H1 (cell line): ENCODE measurements at regions of chr18 and their contacts with region 1.

Region 1: DNA sequence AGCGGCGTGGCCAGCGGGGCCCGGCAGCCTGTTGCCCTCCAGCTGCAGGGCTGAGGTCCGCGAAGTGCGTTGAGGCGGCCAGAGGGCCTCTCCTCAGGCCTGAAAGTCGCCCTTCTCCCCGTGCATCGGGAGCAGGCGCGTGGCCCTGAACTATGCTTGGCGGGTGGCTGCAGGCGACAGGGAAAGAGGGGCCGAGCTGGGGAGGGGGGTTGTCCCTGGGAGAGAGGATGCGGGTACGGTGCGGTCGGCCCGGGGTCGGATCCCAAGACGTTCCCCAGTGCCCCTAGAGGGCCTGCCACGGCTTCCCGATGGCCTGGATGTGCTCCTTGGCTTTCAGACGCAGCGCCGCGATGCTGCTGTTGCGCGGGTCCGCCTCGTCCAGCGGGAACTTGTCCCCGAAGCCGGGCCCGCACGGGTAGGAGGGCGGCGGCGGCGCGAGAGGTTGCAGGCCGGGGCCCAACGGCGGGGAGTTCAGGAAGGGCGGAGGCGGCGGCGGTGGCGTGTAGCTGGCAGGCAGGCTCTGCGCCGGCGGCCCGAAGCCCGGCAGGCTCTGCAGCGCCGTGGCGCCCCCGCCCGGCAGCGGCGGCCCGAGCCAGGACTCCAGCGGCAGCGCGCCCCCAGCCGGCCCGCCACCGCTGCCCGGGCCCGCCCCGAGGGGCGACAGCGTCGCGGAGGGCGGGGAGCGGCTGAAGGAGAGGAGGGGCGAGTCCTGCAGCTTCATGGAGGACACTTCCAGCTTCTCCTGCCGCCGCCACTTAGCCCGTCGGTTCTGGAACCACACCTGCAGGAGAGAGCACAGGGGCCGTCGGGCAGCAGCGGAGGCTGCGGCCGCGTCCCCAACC is 4.3 kb downstream of the RAX start:
- DNase-seq: peak in 1 of 2 experiments; percentile 89
- H3K4me3 ChIP-seq: peak overlapping the region; percentile 51 to 67 (median 61)
- H3K27ac ChIP-seq: no peak overlapping the region
- H3K4me1 ChIP-seq: peaks cover 0 to 44% (median 24%) of the 10 kb centered on the region in 4 experiments; a peak in 6 of 7 replicates
- H3K27me3 ChIP-seq: peaks cover 88 to 98% (median 93%) of the 10 kb centered on the region in 4 experiments
- CTCF ChIP-seq: peak in 2 of 3 experiments; percentile 52 to 92; a peak in 3 of 4 replicates
- EP300 ChIP-seq: no peak
- POLR2A ChIP-seq: no peak
- RAD21 ChIP-seq: peak in 1 of 2 experiments; percentile 47; a peak in 2 of 4 replicates

Region 2: GRCh38 chr18:59008301-59008974 is 260.5 kb before region 1 on chr18:
- CTCF ChIA-PET with region 1: no interaction called
- POLR2A ChIA-PET with region 1: no interaction called
- DNase-seq: peak; percentile 10 to 52
- H3K4me3 ChIP-seq: peak overlapping the region in 1 of 4 experiments; percentile 12; a peak in 1 of 8 replicates
- H3K27ac ChIP-seq: no peak overlapping the region
- H3K4me1 ChIP-seq: peaks cover 0 to 5% (median 2%) of the 10 kb centered on the region in 4 experiments; a peak in 3 of 7 replicates
- H3K27me3 ChIP-seq: no peaks in the 10 kb centered on the region
- CTCF ChIP-seq: no peak
- EP300 ChIP-seq: no peak
- POLR2A ChIP-seq: no peak
- RAD21 ChIP-seq: no peak

Region 3: DNA sequence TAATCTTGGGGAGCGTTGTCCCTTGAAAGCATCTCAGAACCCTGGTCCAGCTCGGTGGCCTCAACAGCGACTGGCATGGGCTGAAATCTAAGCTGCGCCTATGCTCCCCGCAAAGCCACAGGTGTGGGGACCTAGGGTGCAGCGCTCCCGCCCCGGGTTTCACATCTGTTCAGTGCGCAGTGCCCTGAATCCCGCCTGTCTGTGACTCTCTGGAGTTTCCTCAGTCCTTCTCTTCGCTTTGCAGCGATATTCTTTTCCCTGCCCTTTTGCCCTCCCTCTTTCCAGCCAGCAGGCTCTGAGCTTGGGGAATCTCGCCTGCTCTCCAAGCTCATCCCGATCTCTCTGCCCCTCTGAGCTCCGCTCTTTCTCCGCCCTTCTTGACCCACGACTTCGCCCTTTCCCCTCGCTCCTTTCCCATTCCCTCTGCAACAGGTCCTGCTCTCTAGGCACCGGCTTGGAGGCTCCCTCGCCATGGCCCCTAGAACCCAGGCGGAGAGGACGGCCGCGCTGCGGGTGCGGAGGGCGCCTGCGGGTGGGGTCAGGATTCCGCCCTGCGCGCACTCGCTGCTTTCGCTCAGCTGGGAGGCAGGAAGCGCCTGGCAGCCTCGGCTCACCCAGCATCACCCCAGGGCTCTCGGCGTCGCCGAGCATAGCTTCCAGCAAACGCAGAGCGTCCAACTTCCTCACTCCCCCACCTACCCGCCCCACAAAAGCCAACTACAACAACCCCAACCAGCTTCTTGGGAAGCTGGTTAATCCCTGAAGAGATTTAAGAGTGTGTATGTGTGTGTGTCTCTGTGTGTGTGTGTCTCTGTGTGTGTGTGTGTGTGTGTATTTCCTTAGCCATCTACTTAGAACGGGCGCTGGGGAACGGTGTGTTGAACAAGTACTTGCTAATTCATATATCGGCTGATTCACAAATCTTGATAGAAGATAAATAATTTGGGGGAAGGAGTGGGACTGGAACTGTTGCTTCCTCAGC is 47.9 kb before region 1 on chr18:
- CTCF ChIA-PET with region 1: interaction called, 72 read pairs
- POLR2A ChIA-PET with region 1: interaction called, 5 read pairs
- DNase-seq: peak in 1 of 2 experiments; percentile 70
- H3K4me3 ChIP-seq: peak overlapping the region; percentile 45 to 71 (median 56)
- H3K27ac ChIP-seq: no peak overlapping the region
- H3K4me1 ChIP-seq: peaks cover 0 to 14% (median 7%) of the 10 kb centered on the region in 4 experiments; a peak in 5 of 7 replicates
- H3K27me3 ChIP-seq: peaks cover 46 to 66% (median 57%) of the 10 kb centered on the region in 4 experiments
- CTCF ChIP-seq: no peak
- EP300 ChIP-seq: no peak
- POLR2A ChIP-seq: no peak
- RAD21 ChIP-seq: no peak

Region 4: GRCh38 chr18:59286341-59286740 is 17.4 kb after region 1 on chr18:
- CTCF ChIA-PET with region 1: interaction called, 10 read pairs
- POLR2A ChIA-PET with region 1: no interaction called
- DNase-seq: no peak
- H3K4me3 ChIP-seq: no peak overlapping the region
- H3K27ac ChIP-seq: no peak overlapping the region
- H3K4me1 ChIP-seq: no peaks in the 10 kb centered on the region
- H3K27me3 ChIP-seq: peaks cover 0 to 4% (median 2%) of the 10 kb centered on the region in 4 experiments; a peak in 2 of 7 replicates
- CTCF ChIP-seq: no peak
- EP300 ChIP-seq: no peak
- POLR2A ChIP-seq: no peak
- RAD21 ChIP-seq: no peak

Region 5: DNA sequence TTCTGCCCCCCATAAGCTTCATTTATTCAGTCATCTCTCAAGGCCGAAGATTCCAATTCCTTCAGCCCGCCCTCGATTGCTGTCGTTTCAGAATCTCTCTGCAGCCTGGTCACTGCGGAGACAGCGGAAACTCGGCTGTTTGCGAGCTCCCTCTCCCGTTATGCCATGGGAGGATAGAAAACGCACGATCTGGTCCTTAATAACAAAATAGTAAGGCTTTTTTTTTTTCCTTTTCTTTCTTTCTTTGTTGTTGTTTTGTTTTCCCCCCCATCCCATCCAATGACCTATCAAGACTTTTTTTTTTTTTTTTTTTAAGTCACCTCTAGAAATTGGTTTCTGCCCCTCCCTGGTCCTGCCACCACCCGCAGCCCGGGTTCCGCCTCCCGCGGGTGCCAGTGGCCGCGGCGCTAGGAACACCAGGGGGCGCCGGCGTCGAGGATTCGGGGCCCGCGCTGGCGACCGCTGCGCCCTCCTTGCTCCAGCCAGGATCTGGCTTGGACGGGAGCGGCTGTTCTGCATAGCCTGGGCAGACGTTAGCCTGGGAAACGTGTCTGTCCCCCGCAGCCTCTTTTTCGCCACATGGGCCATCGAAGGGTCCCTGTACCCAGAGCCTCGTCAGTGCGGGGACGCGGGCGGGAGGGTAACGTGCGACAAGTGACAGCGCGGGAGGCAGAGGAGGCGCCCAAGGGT is 39.5 kb after region 1 on chr18:
- CTCF ChIA-PET with region 1: interaction called, 16 read pairs
- POLR2A ChIA-PET with region 1: interaction called, 4 read pairs
- DNase-seq: peak; percentile 15 to 89
- H3K4me3 ChIP-seq: peak overlapping the region; percentile 14 to 54 (median 47); a peak in 7 of 8 replicates
- H3K27ac ChIP-seq: no peak overlapping the region
- H3K4me1 ChIP-seq: no peaks in the 10 kb centered on the region; a peak in 1 of 7 replicates
- H3K27me3 ChIP-seq: peaks cover 0 to 13% (median 6%) of the 10 kb centered on the region in 4 experiments; a peak in 6 of 7 replicates
- CTCF ChIP-seq: peak; percentile 58 to 92 (median 74)
- EP300 ChIP-seq: no peak
- POLR2A ChIP-seq: no peak
- RAD21 ChIP-seq: peak; percentile 75 to 82